ENCODE measurements at regions of chr4 and their contacts with region 1.

Region 1: DNA sequence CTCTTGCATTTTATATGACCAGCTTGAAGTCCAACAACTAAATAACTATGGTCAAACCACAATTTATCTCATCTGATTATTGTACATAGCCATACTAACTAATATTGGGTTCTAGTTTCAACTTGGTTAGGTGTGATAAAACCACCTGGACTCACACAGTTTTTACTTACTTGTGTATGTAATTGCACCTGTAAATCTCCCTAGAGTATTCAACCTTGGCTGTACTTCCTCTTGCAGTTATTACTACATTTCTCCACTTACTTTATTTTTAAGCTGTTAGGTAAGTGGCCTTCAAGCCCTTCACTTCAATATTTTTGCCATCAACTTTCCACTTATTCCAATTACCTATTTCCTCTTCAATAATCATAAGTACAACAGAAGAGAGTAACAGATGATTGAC is 115.8 kb upstream of the ANKRD50 start:
- DNase-seq: no peak
- ATAC-seq: no peak
- H3K4me3 ChIP-seq: no peak overlapping the region
- H3K27ac ChIP-seq: no peak overlapping the region
- H3K4me1 ChIP-seq: no peaks in the 10 kb centered on the region
- H3K27me3 ChIP-seq: no peaks in the 10 kb centered on the region
- CTCF ChIP-seq: no peak
- POLR2A ChIP-seq: no peak

Region 2: DNA sequence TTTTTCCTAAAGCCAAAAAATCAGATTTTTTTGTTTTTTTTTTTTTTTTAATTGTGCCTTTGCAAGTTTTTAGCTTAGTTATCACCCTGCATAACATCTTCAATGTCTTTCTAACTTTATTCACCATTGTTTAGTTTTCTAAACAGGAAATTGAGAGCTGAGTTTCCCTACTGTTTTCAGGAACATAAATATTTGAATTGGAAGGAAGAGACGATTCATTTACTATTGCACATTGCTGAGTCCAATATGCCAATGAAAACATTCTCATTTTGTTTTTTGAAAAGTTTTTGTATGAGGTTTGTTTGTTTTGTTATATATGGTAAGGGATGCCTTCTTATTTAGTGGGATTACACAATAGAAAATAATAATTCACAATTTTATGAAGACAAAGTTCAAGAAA is 264.3 kb before region 1 on chr4:
- intact Hi-C with region 1: no loop called
- DNase-seq: no peak
- ATAC-seq: no peak
- H3K4me3 ChIP-seq: no peak overlapping the region
- H3K27ac ChIP-seq: no peak overlapping the region
- H3K4me1 ChIP-seq: no peaks in the 10 kb centered on the region
- H3K27me3 ChIP-seq: no peaks in the 10 kb centered on the region
- CTCF ChIP-seq: no peak
- POLR2A ChIP-seq: no peak

Region 3: GRCh38 chr4:126250006-126250405 is 1421.6 kb after region 1 on chr4:
- intact Hi-C with region 1: loop called in 1 of 10 experiments (anchors 10 kb)
- DNase-seq: no peak
- ATAC-seq: no peak
- H3K4me3 ChIP-seq: no peak overlapping the region
- H3K27ac ChIP-seq: no peak overlapping the region
- H3K4me1 ChIP-seq: no peaks in the 10 kb centered on the region
- H3K27me3 ChIP-seq: no peaks in the 10 kb centered on the region
- CTCF ChIP-seq: no peak
- POLR2A ChIP-seq: no peak